ENCODE measurements at regions of chrX and their contacts with region 1.

Region 1: GRCh38 chrX:40127052-40127451 is 29.3 kb upstream of the BCOR start:
- DNase-seq: peak in 5 of 35 experiments; percentile 5 to 36 (median 13)
- ATAC-seq: peak; percentile 75 to 86 (median 80)
- H3K4me3 ChIP-seq: no peak overlapping the region
- H3K4me3 Mint-ChIP-seq: no peak overlapping the region
- H3K27ac ChIP-seq: no peak overlapping the region
- H3K27ac Mint-ChIP-seq: peak overlapping the region; percentile 40 to 64
- H3K4me1 ChIP-seq: peaks cover 0 to 7% of the 10 kb centered on the region in 2 experiments
- H3K4me1 Mint-ChIP-seq: peaks cover 5 to 7% (median 6%) of the 10 kb centered on the region in 3 donors
- H3K27me3 ChIP-seq: no peaks in the 10 kb centered on the region
- H3K27me3 Mint-ChIP-seq: peaks cover 0 to 4% of the 10 kb centered on the region in 2 donors

Region 2: GRCh38 chrX:38312436-38312835 is 1814.6 kb before region 1 on chrX:
- CTCF ChIA-PET with region 1: no interaction called
- POLR2A ChIA-PET with region 1: no interaction called
- DNase-seq: no peak
- ATAC-seq: no peak
- H3K4me3 ChIP-seq: no peak overlapping the region
- H3K4me3 Mint-ChIP-seq: no peak overlapping the region
- H3K27ac ChIP-seq: no peak overlapping the region
- H3K27ac Mint-ChIP-seq: no peak overlapping the region
- H3K4me1 ChIP-seq: no peaks in the 10 kb centered on the region
- H3K4me1 Mint-ChIP-seq: no peaks in the 10 kb centered on the region
- H3K27me3 ChIP-seq: no peaks in the 10 kb centered on the region
- H3K27me3 Mint-ChIP-seq: no peaks in the 10 kb centered on the region

Region 3: DNA sequence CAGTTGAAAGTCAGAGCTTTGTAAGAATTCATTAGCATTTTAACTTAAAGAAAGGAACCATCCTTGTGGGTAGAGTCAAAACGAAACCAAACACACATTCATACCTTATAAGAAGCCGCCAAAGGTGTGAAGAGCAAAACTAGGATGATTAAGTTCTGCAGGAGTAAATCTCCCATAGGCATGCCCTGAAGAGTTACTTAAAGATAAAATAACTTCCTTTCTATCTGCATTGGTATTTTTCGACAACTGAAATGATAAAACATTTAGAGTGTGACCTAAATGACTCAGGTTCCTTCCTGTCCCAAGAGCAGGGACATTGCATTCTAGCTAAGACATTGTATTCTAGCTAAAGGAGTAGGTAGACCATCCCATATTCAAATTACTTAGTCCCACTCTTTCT is 104.6 kb before region 1 on chrX:
- CTCF ChIA-PET with region 1: no interaction called
- POLR2A ChIA-PET with region 1: no interaction called
- DNase-seq: peak in 1 of 35 experiments; percentile 14
- ATAC-seq: peak in 2 of 4 experiments; percentile 32 to 40
- H3K4me3 ChIP-seq: no peak overlapping the region
- H3K4me3 Mint-ChIP-seq: peak overlapping the region in 1 of 3 donors; percentile 46
- H3K27ac ChIP-seq: no peak overlapping the region
- H3K27ac Mint-ChIP-seq: peak overlapping the region; percentile 22 to 55
- H3K4me1 ChIP-seq: peaks cover 0 to 8% of the 10 kb centered on the region in 2 experiments
- H3K4me1 Mint-ChIP-seq: peaks cover 7 to 16% (median 13%) of the 10 kb centered on the region in 3 donors
- H3K27me3 ChIP-seq: no peaks in the 10 kb centered on the region
- H3K27me3 Mint-ChIP-seq: peaks cover 0 to 4% of the 10 kb centered on the region in 2 donors

Region 4: DNA sequence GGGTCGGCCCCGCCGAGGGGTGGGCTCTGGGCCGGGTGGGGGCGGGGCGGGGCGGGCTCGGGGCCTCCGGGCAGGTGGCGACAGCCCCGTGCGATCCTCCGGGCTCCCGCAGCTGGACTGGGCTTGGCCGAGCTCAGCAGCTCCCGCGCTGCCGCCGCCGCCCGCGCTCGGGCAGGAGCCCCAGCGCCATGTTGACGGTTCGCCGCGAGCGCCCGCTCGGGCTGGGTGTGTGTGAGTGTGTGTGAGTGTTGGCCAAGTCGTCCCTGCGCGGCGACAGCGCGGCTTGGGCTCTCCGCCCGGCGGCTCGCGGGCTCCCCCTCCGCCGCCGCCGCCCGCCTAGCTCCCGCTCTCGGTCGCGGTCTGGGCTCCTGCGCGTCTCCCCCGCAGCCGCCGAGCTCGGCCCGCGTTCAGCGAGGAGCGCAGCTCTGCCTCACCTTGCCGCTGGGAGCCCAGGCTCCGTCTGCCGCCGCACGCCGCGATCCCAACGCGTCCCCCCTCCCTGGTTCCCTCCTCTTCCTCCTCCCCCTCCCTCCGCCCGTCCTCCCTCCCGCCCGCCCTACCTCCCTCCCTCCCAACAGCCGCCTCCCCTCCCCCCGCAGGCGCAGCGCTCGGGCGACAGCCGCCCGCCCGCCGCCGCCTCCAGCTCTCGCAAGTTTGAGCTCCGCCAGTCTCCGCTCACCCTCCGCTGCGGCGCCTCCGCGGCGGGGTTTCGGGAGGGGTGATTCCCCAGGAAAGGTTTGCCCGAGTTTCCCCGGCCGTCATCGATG is 29.4 kb before region 1 on chrX and contains the start of gene BCOR:
- CTCF ChIA-PET with region 1: interaction called in 1 of 2 experiments, 3 read pairs
- POLR2A ChIA-PET with region 1: interaction called in 1 of 2 experiments, 16 read pairs
- DNase-seq: peak in 34 of 35 experiments; percentile 25 to 83 (median 57)
- ATAC-seq: peak; percentile 46 to 55 (median 52)
- H3K4me3 ChIP-seq: peak within 1 kb of the TSS; percentile 62 to 79
- H3K4me3 Mint-ChIP-seq: peak within 1 kb of the TSS; percentile 88 to 95 (median 88)
- H3K27ac ChIP-seq: peak within 1 kb of the TSS; percentile 38
- H3K27ac Mint-ChIP-seq: peak within 1 kb of the TSS; percentile 85 to 91
- H3K4me1 ChIP-seq: peaks cover 6 to 33% of the 10 kb centered on the region in 2 experiments
- H3K4me1 Mint-ChIP-seq: peaks cover 22 to 37% (median 24%) of the 10 kb centered on the region in 3 donors
- H3K27me3 ChIP-seq: no peaks in the 10 kb centered on the region
- H3K27me3 Mint-ChIP-seq: peaks cover 0 to 10% of the 10 kb centered on the region in 2 donors
- total RNA-seq, gene BCOR: 24.4 to 49.2 (median 42.2) TPM

Region 5: GRCh38 chrX:40209951-40210617 is 83.0 kb after region 1 on chrX:
- CTCF ChIA-PET with region 1: no interaction called
- POLR2A ChIA-PET with region 1: no interaction called
- DNase-seq: no peak
- ATAC-seq: no peak
- H3K4me3 ChIP-seq: no peak overlapping the region
- H3K4me3 Mint-ChIP-seq: no peak overlapping the region
- H3K27ac ChIP-seq: no peak overlapping the region
- H3K27ac Mint-ChIP-seq: no peak overlapping the region
- H3K4me1 ChIP-seq: peaks cover 2% of the 10 kb centered on the region in 2 experiments
- H3K4me1 Mint-ChIP-seq: peaks cover 0 to 7% (median 2%) of the 10 kb centered on the region in 3 donors
- H3K27me3 ChIP-seq: no peaks in the 10 kb centered on the region
- H3K27me3 Mint-ChIP-seq: no peaks in the 10 kb centered on the region